Activated CD4-positive, alpha-beta T cell treated with anti-CD3 and anti-CD28 coated beads, Interleukin-2, amount 10 ng/mL, durations not matched to agents 24 days and 14 days (primary cell): ENCODE measurements at regions of chr5 and their contacts with region 1.

Region 1: GRCh38 chr5:14727428-14727865 is 62.9 kb downstream of the OTULIN start:
- DNase-seq: peak; percentile 92
- H3K4me3 Mint-ChIP-seq: no peak overlapping the region
- H3K27ac Mint-ChIP-seq: no peak overlapping the region
- H3K4me1 Mint-ChIP-seq: peaks cover 4% of the 10 kb centered on the region
- H3K27me3 Mint-ChIP-seq: no peaks in the 10 kb centered on the region

Region 2: GRCh38 chr5:14296533-14297331 is 430.7 kb before region 1 on chr5:
- intact Hi-C with region 1: no loop called
- DNase-seq: no peak
- H3K4me3 Mint-ChIP-seq: no peak overlapping the region
- H3K27ac Mint-ChIP-seq: no peak overlapping the region
- H3K4me1 Mint-ChIP-seq: no peaks in the 10 kb centered on the region
- H3K27me3 Mint-ChIP-seq: no peaks in the 10 kb centered on the region

Region 3: GRCh38 chr5:14685757-14686156 is 41.7 kb before region 1 on chr5:
- intact Hi-C with region 1: loop called (anchors 1 kb)
- DNase-seq: peak; percentile 83
- H3K4me3 Mint-ChIP-seq: no peak overlapping the region
- H3K27ac Mint-ChIP-seq: peak overlapping the region; percentile 42
- H3K4me1 Mint-ChIP-seq: peaks cover 15% of the 10 kb centered on the region
- H3K27me3 Mint-ChIP-seq: no peaks in the 10 kb centered on the region

Region 4: DNA sequence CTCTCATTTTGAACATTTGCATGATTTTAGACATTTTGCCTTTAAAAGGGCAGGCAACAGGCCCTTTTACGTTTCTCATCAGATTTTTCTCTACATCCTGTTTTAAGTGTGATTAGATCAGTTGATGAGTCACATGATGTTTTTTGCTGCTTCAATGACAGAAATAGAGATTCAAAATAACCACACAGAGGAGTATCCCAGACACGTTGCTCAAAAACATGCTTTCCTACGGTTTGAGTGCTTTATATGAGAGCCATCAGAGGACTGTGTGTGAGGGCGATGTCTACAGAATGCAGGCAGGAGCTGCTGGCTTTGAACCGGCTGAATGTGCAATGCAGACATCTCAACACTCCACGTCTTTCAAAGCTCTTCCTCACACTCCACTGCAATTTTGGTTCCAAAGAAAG is 20.8 kb before region 1 on chr5:
- intact Hi-C with region 1: loop called (anchors 2 kb)
- DNase-seq: peak; percentile 87
- H3K4me3 Mint-ChIP-seq: peak overlapping the region; percentile 82
- H3K27ac Mint-ChIP-seq: peak overlapping the region; percentile 99
- H3K4me1 Mint-ChIP-seq: peaks cover 69% of the 10 kb centered on the region
- H3K27me3 Mint-ChIP-seq: no peaks in the 10 kb centered on the region

Region 5: GRCh38 chr5:14821100-14821845 is 93.8 kb after region 1 on chr5:
- intact Hi-C with region 1: no loop called
- DNase-seq: no peak
- H3K4me3 Mint-ChIP-seq: no peak overlapping the region
- H3K27ac Mint-ChIP-seq: no peak overlapping the region
- H3K4me1 Mint-ChIP-seq: peaks cover 19% of the 10 kb centered on the region
- H3K27me3 Mint-ChIP-seq: no peaks in the 10 kb centered on the region

Region 6: DNA sequence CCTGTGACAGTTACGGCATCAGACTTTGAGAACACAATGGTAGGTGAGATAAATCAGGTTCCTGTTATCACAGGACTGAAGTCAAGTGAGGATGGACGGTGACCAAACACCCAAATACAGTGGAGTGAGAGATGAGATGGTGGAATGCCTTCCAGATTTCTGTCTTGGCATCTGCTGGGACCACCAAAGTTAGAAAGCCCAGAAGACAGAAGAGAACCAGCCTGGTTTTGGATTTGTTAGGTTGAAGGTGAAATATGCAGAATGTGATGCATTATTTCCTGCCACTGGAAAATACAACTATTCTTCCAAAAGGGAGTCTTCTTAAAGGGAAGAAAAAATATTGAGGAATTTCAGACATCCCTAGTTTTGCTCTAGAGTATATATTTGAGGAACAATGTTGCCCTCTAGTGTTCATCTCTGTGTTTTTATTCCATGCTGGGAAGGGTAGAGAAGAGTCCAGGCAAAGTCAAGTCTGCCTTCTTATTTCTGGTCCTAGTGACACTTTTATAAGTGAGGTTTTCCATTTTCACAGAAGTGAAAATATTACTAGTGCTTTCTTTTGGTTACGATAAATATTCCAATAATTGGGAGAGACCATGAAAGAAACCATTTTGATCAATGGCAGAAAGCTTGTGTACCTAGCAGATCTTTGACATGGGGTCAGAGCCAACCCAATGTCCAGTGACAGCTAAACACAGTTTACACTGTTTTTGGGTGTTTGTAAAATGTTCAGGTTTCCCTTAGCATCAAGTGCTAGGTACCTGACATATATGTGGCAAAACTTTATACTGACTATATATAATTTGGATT is 286.4 kb after region 1 on chr5:
- intact Hi-C with region 1: loop called (anchors 1 kb)
- DNase-seq: peak; percentile 60
- H3K4me3 Mint-ChIP-seq: no peak overlapping the region
- H3K27ac Mint-ChIP-seq: no peak overlapping the region
- H3K4me1 Mint-ChIP-seq: no peaks in the 10 kb centered on the region
- H3K27me3 Mint-ChIP-seq: peaks cover 4% of the 10 kb centered on the region